HepG2 (cell line): ENCODE measurements at regions of chr12 and their contacts with region 1.

Region 1: DNA sequence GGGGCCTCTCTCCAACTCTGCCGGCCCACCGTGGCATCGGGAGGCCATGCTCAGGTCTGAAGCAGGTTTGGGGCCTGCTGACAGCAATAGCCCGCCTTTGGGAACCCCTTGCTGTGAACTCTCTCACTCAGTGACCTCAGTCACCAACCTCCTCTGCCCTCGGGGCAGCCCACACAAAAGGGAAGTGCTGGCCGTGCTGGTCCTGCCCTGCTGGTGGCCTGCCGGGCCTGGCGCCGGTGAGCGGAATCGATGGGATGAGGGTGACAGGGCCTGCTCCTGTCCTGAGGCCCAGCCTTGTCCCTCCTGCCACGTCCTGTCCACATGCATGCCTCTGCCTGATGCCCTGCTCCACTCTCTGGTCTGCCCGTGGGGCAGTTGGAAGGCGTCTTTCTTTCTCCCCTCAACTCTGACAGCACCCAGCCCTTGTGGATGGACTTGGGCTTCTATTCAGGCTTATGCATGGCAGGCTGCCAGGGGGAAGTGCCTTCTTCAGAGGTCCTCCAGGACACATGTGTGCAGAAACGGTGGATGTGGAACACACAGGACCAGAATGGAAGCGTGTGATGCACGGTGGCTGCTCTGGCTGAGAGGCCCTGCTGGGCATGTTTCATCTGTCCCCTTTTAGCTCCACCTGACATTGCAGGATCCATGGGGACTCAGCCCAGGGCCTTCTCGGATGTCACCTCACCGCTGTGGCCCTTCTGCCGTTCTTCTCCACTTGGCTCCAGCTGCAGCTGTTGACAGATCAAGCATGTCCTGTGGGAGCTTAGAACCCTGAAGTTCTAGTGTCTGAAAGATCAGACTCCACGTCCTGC is 31.9 kb downstream of the IL31 start:
- DNase-seq: no peak
- ATAC-seq: no peak
- H3K4me3 ChIP-seq: no peak overlapping the region
- H3K27ac ChIP-seq: no peak overlapping the region
- H3K4me1 ChIP-seq: no peaks in the 10 kb centered on the region
- H3K27me3 ChIP-seq: no peaks in the 10 kb centered on the region
- CTCF ChIP-seq: no peak
- EP300 ChIP-seq: no peak
- POLR2A ChIP-seq: no peak
- RAD21 ChIP-seq: no peak

Region 2: DNA sequence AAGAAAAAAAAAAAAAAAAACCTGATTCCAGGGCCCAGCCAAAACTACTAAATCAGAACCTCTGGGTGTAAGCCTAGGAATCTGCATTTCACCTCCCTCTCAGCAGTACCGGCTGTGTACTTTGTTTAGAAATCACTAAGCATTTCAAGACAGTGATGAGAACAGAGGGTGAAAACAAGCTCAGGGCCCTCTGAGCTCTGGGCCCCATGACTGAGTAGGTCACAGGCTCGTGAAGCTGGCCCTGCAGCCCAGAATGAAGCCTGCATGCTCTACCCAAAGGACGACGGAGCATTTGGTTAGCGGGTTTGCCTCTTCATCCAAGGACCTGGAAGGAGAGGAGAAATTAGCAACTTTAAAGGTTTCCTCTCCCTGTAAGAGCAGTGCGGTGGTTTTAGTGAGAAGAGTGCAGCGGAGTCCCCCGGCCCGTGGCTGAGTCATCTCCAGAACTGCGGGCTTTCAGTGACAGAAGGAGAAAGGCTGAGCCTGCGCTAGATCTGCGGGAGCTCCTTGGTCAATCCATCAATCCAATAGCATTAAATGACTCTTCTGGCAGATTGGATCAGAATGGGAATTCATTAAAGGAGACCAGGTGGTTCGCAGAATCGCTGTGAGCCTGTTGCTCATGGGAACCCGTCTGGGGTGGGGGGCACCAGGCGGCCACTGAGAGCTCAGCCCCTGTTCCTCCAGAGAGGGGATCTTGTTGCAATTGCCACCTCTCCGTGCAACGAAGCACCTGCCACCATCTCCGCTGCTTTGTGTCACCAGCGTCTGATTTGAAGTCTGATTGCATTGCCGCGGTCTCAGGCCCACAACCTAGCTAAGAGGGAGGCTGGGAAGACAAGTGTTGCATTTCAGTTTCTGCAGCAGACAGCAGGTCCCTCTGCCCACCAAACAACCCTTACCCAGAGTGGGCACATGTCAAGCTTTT is 24.6 kb after region 1 on chr12:
- CTCF ChIA-PET with region 1: no interaction called
- POLR2A ChIA-PET with region 1: no interaction called
- in situ Hi-C with region 1: no loop called
- intact Hi-C with region 1: no loop called
- DNase-seq: no peak
- ATAC-seq: peak; percentile 65
- H3K4me3 ChIP-seq: peak overlapping the region in 1 of 3 experiments; percentile 24; a peak in 2 of 6 replicates
- H3K27ac ChIP-seq: no peak overlapping the region
- H3K4me1 ChIP-seq: peaks cover 24% of the 10 kb centered on the region
- H3K27me3 ChIP-seq: peaks cover 0 to 10% of the 10 kb centered on the region in 2 experiments; a peak in 2 of 5 replicates
- CTCF ChIP-seq: no peak
- EP300 ChIP-seq: no peak
- POLR2A ChIP-seq: no peak
- RAD21 ChIP-seq: no peak

Region 3: DNA sequence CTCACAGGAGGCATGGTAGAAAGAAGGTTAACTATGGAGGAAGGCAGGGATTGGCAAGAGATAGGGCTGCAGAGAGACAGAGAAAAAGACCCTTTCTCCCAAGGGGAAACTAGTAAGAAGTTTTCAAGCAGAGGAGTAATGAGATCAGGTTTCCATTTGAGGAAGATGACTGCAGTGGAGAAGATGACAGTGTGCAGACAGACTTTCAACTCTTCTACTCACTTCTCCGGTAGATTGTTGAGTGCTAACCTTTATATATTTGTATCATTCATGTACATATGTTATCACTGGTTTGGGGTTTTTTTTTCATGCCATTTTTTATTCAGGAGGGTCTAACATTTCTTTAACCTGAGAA is 55.5 kb after region 1 on chr12:
- CTCF ChIA-PET with region 1: no interaction called
- POLR2A ChIA-PET with region 1: no interaction called
- in situ Hi-C with region 1: loop called (anchors 5 kb)
- intact Hi-C with region 1: no loop called
- DNase-seq: no peak
- ATAC-seq: no peak
- H3K4me3 ChIP-seq: no peak overlapping the region
- H3K27ac ChIP-seq: no peak overlapping the region
- H3K4me1 ChIP-seq: peaks cover 53% of the 10 kb centered on the region
- H3K27me3 ChIP-seq: peaks cover 2 to 64% of the 10 kb centered on the region in 2 experiments
- CTCF ChIP-seq: no peak
- EP300 ChIP-seq: no peak
- POLR2A ChIP-seq: no peak
- RAD21 ChIP-seq: no peak